ENCODE measurements at regions of chr12 and their contacts with region 1.

Region 1: DNA sequence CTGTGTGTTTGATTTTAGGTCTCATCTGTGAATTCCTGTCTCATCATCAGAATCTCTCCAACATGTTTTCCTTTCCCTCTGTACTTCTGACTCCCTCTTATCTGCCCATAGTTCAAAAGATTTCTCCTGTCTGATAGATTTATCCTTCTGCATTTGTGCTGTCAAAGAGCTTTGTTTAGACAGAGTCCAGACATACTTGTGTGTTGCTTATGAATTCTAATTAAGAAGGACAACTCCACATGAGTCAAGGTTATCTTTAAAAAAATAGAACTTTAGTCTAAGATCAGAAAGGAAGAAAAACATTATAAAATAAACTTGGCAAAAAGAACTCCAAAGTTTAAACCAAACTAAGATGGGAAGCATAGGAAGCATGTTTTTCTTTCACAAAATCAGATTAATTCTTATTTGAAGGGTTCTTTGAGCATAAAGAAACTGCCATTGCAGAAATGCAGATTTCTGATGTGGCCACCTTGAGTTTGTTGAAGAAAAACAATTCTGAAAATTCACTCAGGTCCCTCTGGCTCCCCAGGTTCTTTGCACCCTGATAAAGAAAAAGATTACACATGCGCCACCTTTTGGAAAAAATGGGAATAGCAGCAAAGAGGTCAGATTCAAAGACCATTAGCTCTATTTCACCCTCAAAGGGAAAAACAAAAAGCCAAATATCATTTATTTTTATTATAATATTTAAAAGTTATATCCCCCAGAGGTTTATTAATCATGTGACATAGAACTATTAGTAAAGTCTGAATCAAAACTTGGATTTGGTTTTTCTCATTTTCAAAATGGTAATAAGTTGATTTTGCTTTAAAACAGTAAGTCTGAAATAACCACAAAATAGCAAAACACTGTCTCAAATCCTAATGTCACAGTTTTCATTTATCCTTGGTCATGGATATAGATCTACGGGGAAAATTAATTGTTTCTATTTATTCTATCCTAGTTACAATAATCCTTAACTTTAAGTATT is 143.7 kb upstream of the DCN start:
- DNase-seq: peak in 3 of 5 donors; percentile 29 to 82 (median 80)
- H3K4me3 ChIP-seq: no peak overlapping the region
- H3K27ac ChIP-seq: no peak overlapping the region
- H3K4me1 ChIP-seq: peaks cover 0 to 2% (median 0%) of the 10 kb centered on the region in 3 donors
- H3K27me3 ChIP-seq: no peaks in the 10 kb centered on the region
- CTCF ChIP-seq: peak; percentile 55

Region 2: DNA sequence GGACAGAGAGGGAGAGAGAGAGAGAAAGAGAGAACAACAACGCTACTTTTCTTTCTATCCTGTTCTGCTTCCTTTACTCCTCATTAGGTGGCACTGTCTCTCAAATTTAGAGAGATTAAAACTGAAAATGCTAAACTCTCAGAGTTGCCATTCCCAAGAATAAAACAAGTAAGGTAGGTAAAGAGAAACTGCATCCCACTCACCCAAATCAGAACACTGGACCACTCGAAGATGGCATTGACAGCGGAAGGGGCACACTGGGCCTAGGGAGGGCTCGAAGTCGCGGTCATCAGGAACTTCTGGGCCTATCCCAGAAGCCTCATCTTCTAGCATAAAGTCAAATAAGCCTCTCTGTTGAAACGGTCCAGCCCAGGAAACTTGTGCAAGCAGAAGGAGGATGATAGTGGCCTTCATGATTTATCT is 148.2 kb before region 1 on chr12:
- intact Hi-C with region 1: loop called (anchors 10 kb)
- DNase-seq: peak in 2 of 5 donors; percentile 46 to 71
- H3K4me3 ChIP-seq: peak overlapping the region in 2 of 3 donors; percentile 30 to 59
- H3K27ac ChIP-seq: peak overlapping the region in 1 of 2 donors; percentile 38
- H3K4me1 ChIP-seq: no peaks in the 10 kb centered on the region
- H3K27me3 ChIP-seq: no peaks in the 10 kb centered on the region
- CTCF ChIP-seq: peak; percentile 40